Astrocyte of the cerebellum (primary cell): ENCODE measurements at regions of chr16 and their contacts with region 1.

Region 1: GRCh38 chr16:2033057-2033908 is 6.6 kb downstream of the NHERF2 start:
- DNase-seq: no peak
- H3K4me3 ChIP-seq: peak overlapping the region; percentile 15
- CTCF ChIP-seq: no peak

Region 2: DNA sequence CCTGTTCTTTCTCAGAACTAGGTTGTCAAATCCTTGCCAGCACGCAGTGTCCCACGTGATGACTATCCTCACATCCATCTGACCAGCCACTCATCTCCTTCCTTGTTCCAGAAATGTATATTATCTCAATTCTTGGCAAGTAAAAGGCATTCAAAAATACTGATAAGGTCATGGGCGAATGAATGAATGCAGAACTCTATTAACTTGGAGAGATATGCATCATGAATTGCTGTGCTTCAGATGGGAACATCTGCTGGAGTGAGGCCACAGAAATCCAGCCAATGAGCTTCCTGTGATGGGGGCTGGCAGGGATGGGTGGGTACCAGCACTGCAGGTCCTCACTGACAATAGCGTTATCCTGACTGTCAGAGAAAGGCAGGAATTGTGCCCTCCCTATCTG is 187.3 kb before region 1 on chr16:
- in situ Hi-C with region 1: no loop called
- DNase-seq: no peak
- H3K4me3 ChIP-seq: no peak overlapping the region
- CTCF ChIP-seq: no peak

Region 3: GRCh38 chr16:1983544-1984346 is 49.5 kb before region 1 on chr16 and contains the start of gene GFER:
- in situ Hi-C with region 1: loop called (anchors 5 kb)
- DNase-seq: peak; percentile 74
- H3K4me3 ChIP-seq: peak within 1 kb of the TSS; percentile 63
- CTCF ChIP-seq: peak; percentile 41

Region 4: DNA sequence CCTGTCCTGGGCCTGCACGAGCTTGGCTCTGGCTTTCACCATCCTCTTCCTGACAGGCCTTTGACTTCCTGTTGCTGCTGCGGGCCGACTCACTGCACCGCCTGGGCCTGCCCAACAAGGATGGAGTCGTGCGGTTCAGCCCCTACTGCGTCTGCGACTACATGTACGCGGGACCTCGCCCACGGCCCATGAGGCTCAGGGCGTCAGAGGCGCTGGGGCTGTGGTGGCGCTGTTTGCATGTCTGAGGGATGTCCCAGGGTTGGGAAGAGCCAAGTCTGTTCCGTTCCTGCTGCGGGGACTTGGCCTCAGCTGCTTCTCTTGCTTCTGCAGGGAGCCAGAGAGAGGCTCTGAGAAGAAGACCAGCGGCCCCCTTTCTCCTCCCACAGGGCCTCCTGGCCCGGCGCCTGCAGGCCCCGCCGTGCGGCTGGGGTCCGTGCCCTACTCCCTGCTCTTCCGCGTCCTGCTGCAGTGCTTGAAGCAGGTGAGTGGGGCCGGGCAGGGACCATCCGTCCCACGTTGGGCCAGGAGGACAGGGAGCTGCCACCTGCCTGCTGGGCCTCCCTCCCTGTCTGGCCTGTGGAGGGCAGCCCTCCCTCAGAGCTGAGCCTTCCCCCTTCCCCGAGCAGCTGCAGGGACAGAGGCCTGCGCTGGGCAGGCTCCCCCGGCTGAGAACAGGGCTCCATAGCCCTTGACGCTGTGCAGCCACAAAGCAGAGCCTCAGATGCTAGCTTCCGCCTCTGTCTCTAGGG is 38.3 kb after region 1 on chr16:
- in situ Hi-C with region 1: loop called (anchors 5 kb)
- DNase-seq: no peak
- H3K4me3 ChIP-seq: no peak overlapping the region
- CTCF ChIP-seq: no peak

Region 5: DNA sequence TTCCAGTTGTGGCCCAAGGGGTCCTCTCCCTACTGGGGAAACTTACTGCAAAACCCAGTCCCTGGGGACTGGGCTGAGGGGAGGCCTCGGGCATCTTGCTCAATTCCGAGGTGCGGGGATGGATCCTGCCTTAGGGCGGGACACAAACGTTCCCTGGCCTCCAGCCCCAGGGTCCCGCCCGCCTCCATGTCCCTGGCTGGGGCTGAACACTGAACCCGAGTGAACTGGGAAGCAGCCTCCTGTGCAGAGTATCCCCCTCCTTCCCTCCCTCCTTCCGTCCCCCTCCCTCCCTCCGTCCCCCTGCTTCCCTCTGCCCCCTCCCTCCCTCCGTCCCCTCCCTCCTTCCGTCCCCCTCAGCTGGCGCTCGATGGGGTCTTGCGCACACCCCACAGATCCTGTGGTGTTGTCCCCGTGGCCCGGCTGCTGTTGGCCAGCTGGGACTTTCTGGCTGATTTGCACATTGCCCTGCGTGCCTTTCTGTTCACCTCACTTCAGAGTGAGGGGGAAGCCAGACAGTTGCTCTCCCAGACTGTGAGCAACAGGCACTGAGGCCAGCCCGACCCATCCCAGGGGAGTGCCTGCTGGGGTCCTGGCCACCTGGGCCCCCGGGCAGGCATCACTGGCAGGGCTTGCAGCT is 127.8 kb after region 1 on chr16:
- in situ Hi-C with region 1: loop called (anchors 10 kb)
- DNase-seq: no peak
- H3K4me3 ChIP-seq: no peak overlapping the region
- CTCF ChIP-seq: no peak